ENCODE measurements at regions of chr10 and their contacts with region 1.

Region 1: GRCh38 chr10:11874542-11875177 is 51.5 kb downstream of the PROSER2 start:
- DNase-seq: peak; percentile 77 to 86
- H3K4me3 ChIP-seq: peak overlapping the region; percentile 38
- H3K27ac ChIP-seq: peak overlapping the region; percentile 100
- H3K4me1 ChIP-seq: peaks cover 63% of the 10 kb centered on the region
- H3K27me3 ChIP-seq: no peaks in the 10 kb centered on the region
- CTCF ChIP-seq: no peak

Region 2: DNA sequence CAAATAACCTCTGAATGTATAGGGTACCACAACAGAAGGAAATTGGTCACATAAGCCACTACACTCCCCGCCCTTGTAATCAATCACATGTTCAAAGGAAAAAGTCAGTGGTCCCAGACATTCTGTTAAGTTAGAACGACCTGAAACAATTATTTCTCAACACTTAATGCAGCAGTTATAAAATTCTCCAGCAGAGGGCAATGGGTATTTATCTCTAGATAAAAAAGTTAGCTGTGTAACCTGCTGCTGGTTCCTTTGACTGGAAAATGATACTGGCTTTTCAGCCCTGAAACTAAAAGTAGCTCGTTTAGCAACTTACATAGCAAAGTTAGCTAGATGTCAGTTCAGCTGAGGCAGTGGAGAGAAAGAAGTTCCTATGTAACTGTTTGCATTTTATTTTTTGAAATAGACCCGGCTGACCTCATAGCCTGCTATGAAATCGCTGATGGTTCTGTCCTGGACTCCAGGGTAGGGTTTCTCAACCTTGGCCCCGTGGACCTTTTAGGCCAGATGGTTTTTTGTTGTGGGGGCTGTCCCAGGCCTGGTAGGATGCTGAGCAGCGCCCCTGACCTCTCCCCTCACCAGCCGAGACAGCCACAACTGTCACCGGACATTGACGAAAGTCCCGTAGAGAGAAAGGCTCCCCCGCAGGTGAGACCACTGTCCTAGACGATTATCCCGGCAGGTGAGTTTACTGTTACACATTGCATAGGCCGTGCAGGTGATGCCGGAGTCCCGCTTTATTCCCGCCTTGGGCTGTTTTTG is 91.7 kb before region 1 on chr10:
- CTCF ChIA-PET with region 1: no interaction called
- POLR2A ChIA-PET with region 1: no interaction called
- intact Hi-C with region 1: no loop called
- DNase-seq: peak; percentile 11 to 59
- H3K4me3 ChIP-seq: no peak overlapping the region
- H3K27ac ChIP-seq: no peak overlapping the region
- H3K4me1 ChIP-seq: no peaks in the 10 kb centered on the region
- H3K27me3 ChIP-seq: no peaks in the 10 kb centered on the region
- CTCF ChIP-seq: peak; percentile 84

Region 3: DNA sequence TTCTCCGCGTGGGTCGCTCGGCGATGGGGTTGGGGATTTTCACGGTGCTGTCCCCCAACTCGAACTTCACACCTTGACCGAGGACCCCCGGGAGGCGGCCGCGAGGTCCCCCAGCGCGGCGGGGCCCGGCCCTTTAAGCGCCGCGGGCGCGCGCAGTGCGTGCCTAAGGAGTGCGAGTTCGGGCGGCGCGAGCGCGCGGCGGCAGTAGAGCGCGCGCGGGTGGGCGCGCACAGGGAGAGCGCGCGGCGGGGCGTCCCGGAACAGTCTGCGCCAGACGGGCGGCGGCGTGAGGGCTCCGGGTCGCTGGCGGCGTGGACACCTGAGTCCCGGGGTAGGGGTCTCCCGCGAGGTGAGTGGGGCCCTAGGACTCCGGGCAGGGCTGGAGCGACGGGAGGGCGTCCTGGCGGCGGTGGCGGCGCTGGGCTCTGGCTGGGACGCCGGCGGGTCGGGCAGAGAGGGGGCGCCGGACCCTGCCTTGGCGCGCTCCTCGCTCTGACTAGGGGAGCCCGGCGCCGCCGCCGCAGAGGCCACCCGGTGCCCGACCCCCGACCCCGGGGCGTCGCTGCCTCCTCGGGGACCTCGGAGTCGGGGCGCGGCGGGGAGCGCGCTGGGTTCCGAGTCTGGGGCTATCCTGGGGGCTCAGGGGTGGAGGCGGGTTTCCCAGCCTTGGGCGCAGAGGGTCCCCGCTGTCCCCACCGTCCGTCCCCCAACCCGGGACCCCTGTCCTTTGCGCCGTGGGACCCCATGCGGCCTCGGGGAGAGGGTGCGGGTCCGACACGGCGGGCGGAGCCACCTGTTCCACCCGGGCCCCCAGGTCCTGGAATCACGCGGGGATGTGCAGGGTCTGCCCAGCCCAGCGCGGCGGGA is 51.3 kb before region 1 on chr10 and contains the start of gene PROSER2:
- CTCF ChIA-PET with region 1: no interaction called
- POLR2A ChIA-PET with region 1: no interaction called
- intact Hi-C with region 1: loop called (anchors 2 kb)
- DNase-seq: peak in 1 of 2 experiments; percentile 70
- H3K4me3 ChIP-seq: peak within 1 kb of the TSS; percentile 92
- H3K27ac ChIP-seq: peak within 1 kb of the TSS; percentile 73
- H3K4me1 ChIP-seq: peaks cover 65% of the 10 kb centered on the region
- H3K27me3 ChIP-seq: no peaks in the 10 kb centered on the region
- CTCF ChIP-seq: no peak
- total RNA-seq, gene PROSER2: 66.6 and 87.5 TPM in 2 replicates

Region 4: DNA sequence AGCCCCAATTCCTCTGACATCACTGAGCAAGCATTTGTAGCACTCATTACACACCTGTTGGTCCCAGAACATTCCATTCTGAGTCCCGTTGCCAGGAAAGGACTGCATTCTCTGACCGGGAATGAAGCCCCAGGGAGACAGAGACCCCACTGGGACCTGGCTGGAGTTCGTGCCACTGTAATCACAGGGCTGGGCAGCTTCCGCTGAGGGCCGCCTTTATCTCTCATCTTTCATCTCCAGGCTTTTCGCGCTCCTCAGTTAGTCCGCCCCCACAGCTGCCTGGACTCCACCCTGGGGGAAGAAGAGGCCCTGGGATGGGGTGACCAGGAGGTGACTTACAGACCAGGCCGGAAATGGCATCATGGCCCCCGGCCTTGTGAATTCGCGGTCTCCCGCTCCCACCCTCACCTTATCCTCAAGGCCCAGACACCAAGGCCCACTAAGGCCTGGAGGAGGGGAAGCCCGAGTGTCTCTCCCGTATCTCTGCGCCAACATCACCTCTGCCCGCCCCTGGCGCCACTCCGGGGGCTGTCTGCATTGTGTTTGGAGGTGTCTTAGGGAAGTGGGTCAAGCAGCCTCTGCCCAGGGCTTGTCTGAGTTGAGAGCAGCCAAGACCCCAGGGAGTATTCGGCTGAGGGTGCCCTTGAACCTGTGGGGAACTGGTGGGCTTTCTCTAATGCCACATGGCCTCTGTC is 23.9 kb after region 1 on chr10:
- CTCF ChIA-PET with region 1: no interaction called
- POLR2A ChIA-PET with region 1: interaction called, 10 read pairs
- intact Hi-C with region 1: loop called (anchors 1 kb)
- DNase-seq: peak; percentile 91 to 94
- H3K4me3 ChIP-seq: no peak overlapping the region; the same call in 1 of the 2 replicates
- H3K27ac ChIP-seq: peak overlapping the region; percentile 99
- H3K4me1 ChIP-seq: peaks cover 33% of the 10 kb centered on the region
- H3K27me3 ChIP-seq: no peaks in the 10 kb centered on the region
- CTCF ChIP-seq: no peak

Region 5: DNA sequence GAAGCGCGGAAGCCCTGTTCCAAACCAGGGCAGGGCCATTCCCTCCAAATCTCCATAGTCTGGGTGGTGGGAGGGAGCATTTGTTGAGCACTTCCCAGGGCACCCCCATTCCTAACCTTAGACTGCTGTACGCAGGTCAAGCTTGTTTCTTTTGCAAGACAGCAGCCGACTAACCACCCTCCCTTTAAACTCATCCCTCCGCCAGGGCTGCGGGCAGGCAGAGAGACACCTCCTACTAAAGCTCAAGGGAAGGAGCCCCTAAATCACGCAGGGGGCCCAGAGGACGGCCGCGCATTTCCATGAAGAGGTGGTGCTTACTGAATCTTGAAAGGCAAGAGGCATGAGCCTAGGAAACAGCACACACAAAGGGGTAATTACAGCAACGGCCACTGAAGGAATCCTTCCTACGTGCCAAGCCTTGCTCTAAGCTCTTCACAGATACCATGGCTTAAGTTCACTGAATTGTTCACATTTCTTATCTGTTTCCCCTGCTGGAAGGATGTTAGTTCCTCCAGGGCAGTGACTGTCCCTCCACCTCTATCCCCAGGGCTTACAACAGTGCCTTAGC is 38.5 kb after region 1 on chr10:
- CTCF ChIA-PET with region 1: no interaction called
- POLR2A ChIA-PET with region 1: no interaction called
- intact Hi-C with region 1: loop called (anchors 1 kb)
- DNase-seq: no peak
- H3K4me3 ChIP-seq: no peak overlapping the region
- H3K27ac ChIP-seq: no peak overlapping the region
- H3K4me1 ChIP-seq: peaks cover 11% of the 10 kb centered on the region; the same call in 1 of the 2 replicates
- H3K27me3 ChIP-seq: no peaks in the 10 kb centered on the region
- CTCF ChIP-seq: no peak

Region 6: GRCh38 chr10:11949152-11949551 is 74.5 kb after region 1 on chr10:
- CTCF ChIA-PET with region 1: no interaction called
- POLR2A ChIA-PET with region 1: interaction called, 18 read pairs
- intact Hi-C with region 1: no loop called
- DNase-seq: no peak
- H3K4me3 ChIP-seq: no peak overlapping the region
- H3K27ac ChIP-seq: no peak overlapping the region
- H3K4me1 ChIP-seq: no peaks in the 10 kb centered on the region
- H3K27me3 ChIP-seq: no peaks in the 10 kb centered on the region
- CTCF ChIP-seq: no peak